ENCODE measurements at regions of chr7 and their contacts with region 1.

Region 1: DNA sequence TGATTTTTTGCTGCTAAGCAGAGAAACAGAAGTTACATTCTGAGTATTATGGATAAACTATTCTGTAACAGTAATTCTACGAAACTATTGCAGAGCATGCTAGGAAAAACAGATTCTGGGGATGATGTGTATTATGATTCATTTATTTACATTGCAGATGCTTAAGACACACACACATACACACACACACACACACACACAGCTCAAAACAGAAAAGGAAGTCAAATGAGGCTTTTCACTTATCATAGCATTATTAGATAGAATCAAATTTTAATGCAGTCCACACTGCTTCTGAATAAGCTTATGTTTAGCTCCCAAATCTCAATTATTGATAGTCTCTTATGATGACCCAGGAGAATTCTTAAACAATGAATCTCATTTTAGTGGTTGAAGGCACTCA is 307.2 kb downstream of the HGF start:
- DNase-seq: no peak
- H3K4me3 ChIP-seq: no peak overlapping the region
- H3K27ac ChIP-seq: no peak overlapping the region
- H3K4me1 ChIP-seq: no peaks in the 10 kb centered on the region
- H3K27me3 ChIP-seq: no peaks in the 10 kb centered on the region
- CTCF ChIP-seq: no peak
- EP300 ChIP-seq: no peak
- POLR2A ChIP-seq: no peak

Region 2: DNA sequence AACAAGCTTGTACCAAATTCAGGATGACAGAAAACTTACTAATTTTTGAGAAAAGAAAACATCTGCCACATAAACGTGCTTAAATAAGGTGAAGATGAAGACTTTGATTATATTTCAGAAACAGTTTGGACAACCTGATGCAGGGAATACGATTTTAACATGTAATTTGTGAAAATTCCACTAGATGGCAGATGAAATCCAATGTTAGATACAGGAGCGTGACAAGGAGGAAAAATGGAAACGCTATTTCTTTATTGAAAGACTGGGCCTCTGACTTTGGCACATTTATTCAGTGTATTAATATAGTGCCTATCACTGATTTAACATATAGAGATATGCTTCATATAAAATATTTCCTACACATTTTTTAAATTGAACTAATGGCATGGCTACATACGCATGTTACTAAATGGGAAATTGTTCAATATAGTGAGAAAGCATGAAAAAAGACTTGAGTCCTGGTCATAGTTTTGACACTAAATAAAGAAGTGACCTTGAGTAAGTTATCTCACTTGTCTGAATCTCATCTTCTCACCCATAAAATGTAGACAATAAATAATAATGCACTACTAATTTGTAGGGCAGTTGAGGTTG is 763.5 kb before region 1 on chr7:
- intact Hi-C with region 1: loop called (anchors 5 kb)
- DNase-seq: peak in 1 of 2 donors; percentile 81
- H3K4me3 ChIP-seq: no peak overlapping the region
- H3K27ac ChIP-seq: peak overlapping the region in 1 of 5 donors; percentile 15
- H3K4me1 ChIP-seq: peaks cover 0 to 16% (median 8%) of the 10 kb centered on the region in 4 donors
- H3K27me3 ChIP-seq: no peaks in the 10 kb centered on the region
- CTCF ChIP-seq: peak in 5 of 7 experiments; percentile 23 to 72 (median 64)
- EP300 ChIP-seq: no peak
- POLR2A ChIP-seq: no peak

Region 3: DNA sequence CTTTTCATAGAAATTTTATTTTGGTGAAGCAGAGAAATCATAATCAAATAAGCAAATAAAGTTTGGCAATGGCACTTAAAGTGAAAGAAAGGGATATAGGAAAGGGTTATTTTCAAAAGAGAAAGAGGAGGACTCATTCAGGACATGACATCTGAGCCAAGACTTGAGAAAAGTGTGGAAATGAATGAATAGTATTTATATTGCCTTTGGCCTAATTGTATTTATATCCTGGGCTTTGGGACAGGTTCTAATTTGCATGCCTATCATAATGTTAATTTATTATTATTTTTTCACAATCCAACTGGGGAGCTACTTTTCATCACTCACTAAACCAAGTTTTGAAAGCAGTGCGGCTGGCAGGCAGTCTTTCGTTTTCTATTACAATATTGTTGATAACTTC is 69.7 kb before region 1 on chr7:
- intact Hi-C with region 1: no loop called
- DNase-seq: no peak
- H3K4me3 ChIP-seq: no peak overlapping the region
- H3K27ac ChIP-seq: no peak overlapping the region
- H3K4me1 ChIP-seq: no peaks in the 10 kb centered on the region
- H3K27me3 ChIP-seq: no peaks in the 10 kb centered on the region
- CTCF ChIP-seq: no peak
- EP300 ChIP-seq: no peak
- POLR2A ChIP-seq: no peak